WTC11 (cell line): ENCODE measurements at regions of chr22 and their contacts with region 1.

Region 1: GRCh38 chr22:46542011-46542985 is 4.9 kb upstream of the CELSR1 start:
- DNase-seq: peak; percentile 90
- ATAC-seq: peak; percentile 96
- H3K4me3 Mint-ChIP-seq: no peak overlapping the region
- H3K27ac Mint-ChIP-seq: no peak overlapping the region
- H3K4me1 Mint-ChIP-seq: peaks cover 5% of the 10 kb centered on the region
- H3K27me3 Mint-ChIP-seq: peaks cover 38% of the 10 kb centered on the region
- CTCF ChIP-seq: peak; percentile 89

Region 2: DNA sequence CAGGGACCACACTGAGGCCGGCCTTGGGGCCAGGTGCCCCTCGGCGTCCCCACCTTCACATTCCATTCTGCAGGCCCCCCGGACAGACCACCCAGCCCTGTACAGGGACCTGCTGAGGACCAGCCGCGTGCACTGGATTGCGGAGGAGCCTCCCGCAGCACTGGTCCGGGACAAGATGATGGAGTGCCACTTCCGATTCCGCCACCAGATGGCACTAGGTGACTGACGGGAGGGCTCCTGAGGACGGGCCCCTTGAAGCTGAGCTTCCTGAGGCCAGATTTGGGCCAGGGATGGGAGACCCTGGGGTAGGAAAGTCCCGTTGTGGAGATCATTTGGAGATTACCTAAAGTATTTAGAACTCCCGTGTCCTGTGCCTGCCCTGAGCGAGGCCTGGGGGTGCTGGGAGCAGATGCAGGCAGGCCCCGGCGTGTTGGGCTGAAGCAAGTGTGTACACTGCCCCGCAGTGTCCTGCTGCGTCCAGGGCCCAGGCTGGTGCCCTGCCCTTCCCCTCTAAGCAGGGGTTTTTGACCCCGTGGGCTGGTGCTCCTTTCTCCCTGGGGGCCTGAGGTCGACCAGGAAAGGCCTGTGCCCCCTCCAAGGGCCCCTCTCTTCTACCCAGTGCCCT is 186.8 kb before region 1 on chr22:
- CTCF ChIA-PET with region 1: interaction called, 22 read pairs
- POLR2A ChIA-PET with region 1: no interaction called
- DNase-seq: peak; percentile 92
- ATAC-seq: peak; percentile 82
- H3K4me3 Mint-ChIP-seq: no peak overlapping the region
- H3K27ac Mint-ChIP-seq: no peak overlapping the region
- H3K4me1 Mint-ChIP-seq: no peaks in the 10 kb centered on the region
- H3K27me3 Mint-ChIP-seq: no peaks in the 10 kb centered on the region
- CTCF ChIP-seq: peak; percentile 82